IMR-90 (cell line): ENCODE measurements at regions of chr1 and their contacts with region 1.

Region 1: GRCh38 chr1:152654110-152654509 is 9.1 kb upstream of the LCE2D start:
- DNase-seq: peak; percentile 33
- ATAC-seq: peak; percentile 67
- H3K4me3 ChIP-seq: no peak overlapping the region
- H3K27ac ChIP-seq: no peak overlapping the region
- H3K4me1 ChIP-seq: no peaks in the 10 kb centered on the region
- H3K27me3 ChIP-seq: no peaks in the 10 kb centered on the region
- CTCF ChIP-seq: peak; percentile 74
- POLR2A ChIP-seq: no peak
- RAD21 ChIP-seq: peak; percentile 66

Region 2: GRCh38 chr1:152356736-152357135 is 297.4 kb before region 1 on chr1:
- CTCF ChIA-PET with region 1: no interaction called
- POLR2A ChIA-PET with region 1: no interaction called
- dilution Hi-C with region 1: no loop called
- in situ Hi-C with region 1: no loop called
- intact Hi-C with region 1: no loop called
- DNase-seq: no peak
- ATAC-seq: no peak
- H3K4me3 ChIP-seq: no peak overlapping the region
- H3K27ac ChIP-seq: no peak overlapping the region
- H3K4me1 ChIP-seq: no peaks in the 10 kb centered on the region
- H3K27me3 ChIP-seq: no peaks in the 10 kb centered on the region
- CTCF ChIP-seq: no peak
- POLR2A ChIP-seq: no peak
- RAD21 ChIP-seq: no peak

Region 3: GRCh38 chr1:153220606-153221303 is 566.6 kb after region 1 on chr1:
- CTCF ChIA-PET with region 1: no interaction called
- POLR2A ChIA-PET with region 1: no interaction called
- dilution Hi-C with region 1: no loop called
- in situ Hi-C with region 1: loop called (anchors 25 kb)
- intact Hi-C with region 1: loop called (anchors 2 kb)
- DNase-seq: no peak
- ATAC-seq: no peak
- H3K4me3 ChIP-seq: no peak overlapping the region
- H3K27ac ChIP-seq: no peak overlapping the region
- H3K4me1 ChIP-seq: no peaks in the 10 kb centered on the region
- H3K27me3 ChIP-seq: no peaks in the 10 kb centered on the region; the same call in 1 of the 2 replicates
- CTCF ChIP-seq: no peak
- POLR2A ChIP-seq: no peak
- RAD21 ChIP-seq: no peak